Astrocyte of the cerebellum (primary cell): ENCODE measurements at regions of chr18 and their contacts with region 1.

Region 1: GRCh38 chr18:74196220-74197119 is 48.1 kb downstream of the TIMM21 start:
- DNase-seq: peak; percentile 52
- H3K4me3 ChIP-seq: peak overlapping the region; percentile 20
- CTCF ChIP-seq: peak; percentile 87

Region 2: GRCh38 chr18:73975266-73975665 is 221.2 kb before region 1 on chr18:
- in situ Hi-C with region 1: no loop called
- DNase-seq: peak; percentile 94
- H3K4me3 ChIP-seq: no peak overlapping the region
- CTCF ChIP-seq: peak; percentile 4

Region 3: DNA sequence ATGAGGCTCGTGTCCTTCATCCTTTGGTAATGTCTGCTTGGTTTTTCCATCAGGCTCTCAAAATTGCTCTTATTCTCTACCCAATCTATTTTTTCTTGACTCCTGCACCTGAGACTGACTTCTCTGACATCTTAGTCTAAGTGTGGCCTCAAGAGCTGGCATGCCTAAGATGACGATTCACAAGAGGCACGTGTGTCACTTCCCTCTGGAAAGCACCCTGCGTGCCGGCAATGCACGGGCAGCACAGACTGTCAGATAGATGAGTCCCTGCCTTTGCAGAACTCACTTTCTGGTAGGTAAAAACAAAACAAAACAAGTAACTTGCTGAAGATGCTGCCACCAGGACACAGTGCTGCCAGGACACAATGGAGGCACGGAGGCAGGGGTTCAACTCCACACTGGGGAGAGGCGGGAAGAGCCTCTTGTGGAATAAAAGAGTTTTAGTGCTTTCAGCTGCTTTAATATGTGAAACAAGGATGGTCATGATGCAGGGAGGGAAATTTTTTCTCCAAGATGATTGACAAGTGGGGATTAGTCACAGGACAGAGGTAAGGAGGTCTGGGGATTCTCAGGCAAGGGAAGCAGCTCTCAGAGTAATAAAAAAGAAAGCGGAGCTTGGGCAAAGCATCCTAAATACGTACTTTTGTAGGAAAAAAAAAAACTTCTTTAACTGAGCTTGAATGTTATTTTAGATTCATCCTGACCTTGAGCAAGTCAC is 68.0 kb after region 1 on chr18:
- in situ Hi-C with region 1: no loop called
- DNase-seq: no peak
- H3K4me3 ChIP-seq: no peak overlapping the region
- CTCF ChIP-seq: no peak

Region 4: GRCh38 chr18:74342416-74343043 is 146.1 kb after region 1 on chr18:
- in situ Hi-C with region 1: loop called (anchors 25 kb)
- DNase-seq: peak; percentile 72
- H3K4me3 ChIP-seq: no peak overlapping the region
- CTCF ChIP-seq: peak; percentile 45

Region 5: DNA sequence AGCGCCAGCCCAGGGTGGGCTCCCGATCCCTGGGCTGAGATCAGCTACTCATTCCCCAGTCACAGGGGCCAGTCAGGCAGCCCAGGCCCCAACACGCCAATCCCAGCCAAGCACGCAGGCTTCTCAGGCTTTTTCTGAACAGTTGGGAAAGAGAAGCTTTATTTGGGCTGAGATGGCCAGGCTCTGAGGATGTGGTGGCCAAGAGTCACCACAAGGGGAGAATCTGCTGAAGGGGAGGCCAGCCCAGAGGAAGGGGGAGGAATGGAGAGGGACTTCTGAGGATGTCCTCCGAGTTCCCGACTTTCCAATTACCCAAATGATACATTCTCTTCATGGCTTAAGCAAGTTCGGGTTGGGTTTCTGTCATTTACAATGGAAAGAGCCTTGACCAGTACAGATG is 263.4 kb after region 1 on chr18:
- in situ Hi-C with region 1: loop called (anchors 25 kb)
- DNase-seq: no peak
- H3K4me3 ChIP-seq: no peak overlapping the region
- CTCF ChIP-seq: peak; percentile 32

Region 6: GRCh38 chr18:74597662-74598349 is 401.3 kb after region 1 on chr18 and contains the start of gene ZNF407:
- in situ Hi-C with region 1: no loop called
- DNase-seq: peak; percentile 80
- H3K4me3 ChIP-seq: peak within 1 kb of the TSS; percentile 95
- CTCF ChIP-seq: no peak